ENCODE measurements at regions of chr1 and their contacts with region 1.

Region 1: DNA sequence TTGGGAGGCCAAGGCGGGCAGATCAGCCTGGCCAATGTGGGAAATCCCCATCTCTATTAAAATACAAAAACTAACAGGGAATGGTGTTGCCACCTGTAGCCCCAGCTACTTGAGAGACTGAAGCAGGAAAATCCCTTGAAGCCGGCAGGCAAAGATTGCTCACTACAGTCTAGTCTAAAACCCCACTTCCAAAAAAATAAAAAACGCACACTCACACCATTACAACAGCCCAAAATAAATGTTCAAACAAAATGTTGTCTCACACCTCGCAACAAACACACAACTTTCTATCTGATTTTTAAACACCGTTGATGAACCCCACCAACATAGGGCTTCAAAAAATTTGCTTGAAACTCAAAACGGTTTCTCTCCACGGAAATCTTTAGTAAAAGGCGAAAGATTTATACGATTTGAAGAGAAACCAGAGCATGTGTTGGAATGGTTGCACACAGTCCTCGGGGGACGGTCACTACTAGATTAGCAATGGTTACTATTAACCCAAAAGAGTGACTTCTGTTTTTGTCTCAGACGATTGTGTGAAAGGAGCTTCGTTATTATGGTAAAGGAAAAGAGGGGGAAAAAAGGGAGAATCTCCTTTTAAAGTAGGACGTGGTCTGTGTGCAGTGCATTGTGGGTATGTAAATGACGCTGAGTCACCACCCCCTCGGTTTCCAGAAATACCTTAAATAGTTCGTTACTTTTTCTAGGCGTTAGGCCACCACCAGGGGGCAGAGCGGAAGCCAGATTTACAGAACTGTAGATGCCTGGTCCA is at the start of gene RNU5D-1:
- DNase-seq: peak; percentile 96
- H3K4me3 Mint-ChIP-seq: peak within 1 kb of the TSS; percentile 69
- H3K27ac Mint-ChIP-seq: peak within 1 kb of the TSS; percentile 100
- H3K4me1 Mint-ChIP-seq: peaks cover 37% of the 10 kb centered on the region
- H3K27me3 Mint-ChIP-seq: peaks cover 3% of the 10 kb centered on the region
- total RNA-seq, gene RNU5D-1: not detected

Region 2: DNA sequence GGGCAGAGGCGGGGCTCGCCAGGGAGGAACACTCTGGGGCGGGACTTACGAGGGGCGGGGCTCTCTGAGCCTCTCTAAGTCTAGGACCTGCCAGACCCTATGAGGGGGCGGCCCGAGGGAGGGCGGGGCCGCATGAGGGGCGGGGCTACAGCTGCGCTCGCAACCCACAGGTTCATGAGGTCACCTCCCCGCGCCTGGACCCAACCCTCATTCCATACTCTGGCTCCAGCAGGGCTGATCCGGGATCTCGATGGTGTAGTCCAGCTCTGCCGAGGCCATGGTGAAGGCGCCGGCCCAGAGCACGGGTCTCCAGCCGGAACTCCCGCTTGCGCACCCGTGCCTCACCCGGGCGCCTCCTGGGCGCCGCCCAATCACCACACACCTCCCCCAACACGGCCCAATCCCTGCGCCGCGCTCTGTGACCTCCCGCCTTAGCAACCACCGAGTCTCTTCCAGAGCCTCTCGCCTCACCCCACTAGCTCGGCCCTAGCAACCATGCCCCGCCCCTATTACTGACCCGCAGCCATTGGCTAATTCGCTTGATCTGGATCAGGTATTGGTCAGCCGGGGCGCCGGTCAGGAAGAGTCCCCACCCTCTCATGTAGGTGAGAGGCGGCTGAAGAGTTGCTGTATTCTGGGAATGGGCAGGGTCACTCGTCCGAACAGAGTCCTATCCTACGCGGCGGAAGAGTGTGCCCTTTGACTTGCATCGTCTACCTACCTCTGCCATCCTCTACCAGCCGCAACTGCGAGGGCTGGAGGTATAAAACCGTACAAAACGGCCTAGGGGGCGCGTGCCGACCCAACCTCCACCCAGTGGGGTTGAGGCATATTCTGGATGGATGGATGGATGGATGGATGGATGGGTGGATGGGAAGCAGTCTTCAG is 56.6 kb before region 1 on chr1 and contains the starts of genes ARMH1 and TMEM53:
- CTCF ChIA-PET with region 1: no interaction called
- POLR2A ChIA-PET with region 1: interaction called, 7 read pairs
- intact Hi-C with region 1: loop called (anchors 1 kb)
- DNase-seq: peak; percentile 99
- H3K4me3 Mint-ChIP-seq: peak within 1 kb of the TSS; percentile 83
- H3K27ac Mint-ChIP-seq: peak within 1 kb of the TSS; percentile 88
- H3K4me1 Mint-ChIP-seq: peaks cover 23% of the 10 kb centered on the region
- H3K27me3 Mint-ChIP-seq: no peaks in the 10 kb centered on the region
- total RNA-seq, gene ARMH1: 134 to 141 TPM
- total RNA-seq, gene TMEM53: 5.1 to 6.5 TPM

Region 3: DNA sequence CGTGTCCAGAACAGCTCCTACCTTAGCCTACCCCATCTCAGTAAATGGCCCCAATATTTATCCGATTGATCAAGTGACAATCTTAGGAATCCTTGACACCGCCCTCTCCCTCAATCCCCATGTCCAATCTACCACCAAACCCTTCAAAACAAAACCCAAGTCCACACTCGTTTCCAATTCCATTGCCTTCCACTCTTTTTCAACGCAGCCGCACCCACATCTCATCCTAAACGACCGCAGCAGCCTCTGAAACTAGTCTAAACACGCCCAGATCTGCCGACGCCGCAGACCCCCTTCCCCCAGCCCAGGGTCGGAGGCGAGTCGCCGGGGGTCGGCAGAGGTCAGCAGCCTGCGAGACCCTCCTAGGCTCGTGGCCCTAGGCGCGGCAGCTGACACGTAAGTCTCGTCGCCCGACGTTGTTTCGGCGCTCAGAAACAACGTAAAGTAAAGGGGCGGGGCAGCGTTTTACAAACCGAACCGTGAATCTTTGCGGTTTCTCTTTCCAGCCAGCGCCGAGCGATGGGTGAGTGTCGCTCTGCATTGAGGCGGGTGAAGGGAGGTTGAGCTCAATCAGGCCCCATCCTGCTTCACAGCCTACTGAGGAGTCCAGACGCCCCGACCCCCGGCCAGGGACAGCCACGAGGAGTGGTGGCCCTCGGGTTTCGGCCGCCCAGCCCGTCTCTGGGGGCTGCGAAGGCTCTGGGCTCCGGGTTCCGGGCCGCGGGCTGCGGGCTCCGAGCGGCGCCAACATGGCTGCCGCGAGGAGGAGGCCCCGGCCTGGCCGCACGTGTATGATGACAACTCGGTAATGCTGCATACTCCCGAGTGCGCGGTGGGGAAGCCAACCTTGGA is 44.4 kb after region 1 on chr1 and contains the start of gene RPS8:
- CTCF ChIA-PET with region 1: interaction called, 20 read pairs
- POLR2A ChIA-PET with region 1: interaction called, 51 read pairs
- intact Hi-C with region 1: loop called (anchors 2 kb)
- DNase-seq: peak; percentile 94
- H3K4me3 Mint-ChIP-seq: peak within 1 kb of the TSS; percentile 83
- H3K27ac Mint-ChIP-seq: peak within 1 kb of the TSS; percentile 81
- H3K4me1 Mint-ChIP-seq: peaks cover 38% of the 10 kb centered on the region
- H3K27me3 Mint-ChIP-seq: no peaks in the 10 kb centered on the region
- total RNA-seq, gene RPS8: 2,983 to 3,047 TPM

Region 4: DNA sequence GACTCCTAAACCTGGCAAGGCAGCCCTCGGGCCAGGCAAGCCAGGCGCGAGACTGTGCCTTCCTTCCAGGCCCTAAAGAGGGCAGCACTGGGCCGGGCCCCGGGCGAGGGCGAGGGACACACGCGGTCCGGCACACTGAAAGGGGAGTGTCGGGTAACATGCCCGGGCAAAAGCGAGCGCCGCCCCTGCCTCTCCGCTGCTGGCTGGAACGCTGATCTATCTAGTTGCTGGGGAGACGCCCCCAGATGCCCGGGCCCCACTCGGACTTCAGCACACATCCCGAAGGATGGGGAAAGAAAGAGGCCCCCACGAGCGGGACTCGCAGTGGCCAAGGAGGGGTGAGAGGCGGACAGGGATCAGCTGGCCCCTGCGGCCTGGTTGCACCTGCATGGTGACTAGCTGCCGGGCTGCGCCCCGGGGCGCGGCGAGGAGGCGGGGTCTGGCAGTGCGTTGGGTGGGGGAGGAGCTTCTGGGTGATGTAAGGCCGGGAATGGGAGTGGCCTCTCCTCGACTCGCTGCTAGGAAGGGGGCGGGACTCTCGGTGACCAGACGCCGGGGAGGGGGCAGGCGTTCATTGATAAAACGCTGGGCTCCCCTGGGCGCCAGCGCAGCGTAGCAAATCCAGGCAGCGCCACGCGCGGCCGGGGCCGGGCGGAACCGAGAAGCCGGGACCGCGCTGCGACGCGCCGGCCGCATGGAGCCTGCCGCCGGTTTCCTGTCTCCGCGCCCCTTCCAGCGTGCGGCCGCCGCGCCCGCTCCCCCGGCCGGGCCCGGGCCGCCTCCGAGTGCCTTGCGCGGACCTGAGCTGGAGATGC is 69.0 kb after region 1 on chr1 and contains the start of gene PLK3:
- CTCF ChIA-PET with region 1: interaction called, 8 read pairs
- POLR2A ChIA-PET with region 1: interaction called, 17 read pairs
- intact Hi-C with region 1: no loop called
- DNase-seq: peak; percentile 99
- H3K4me3 Mint-ChIP-seq: peak within 1 kb of the TSS; percentile 93
- H3K27ac Mint-ChIP-seq: peak within 1 kb of the TSS; percentile 95
- H3K4me1 Mint-ChIP-seq: peaks cover 34% of the 10 kb centered on the region
- H3K27me3 Mint-ChIP-seq: no peaks in the 10 kb centered on the region
- total RNA-seq, gene PLK3: 80.2 to 87.9 TPM

Region 5: GRCh38 chr1:44812822-44813543 is 82.1 kb after region 1 on chr1:
- CTCF ChIA-PET with region 1: interaction called, 48 read pairs
- POLR2A ChIA-PET with region 1: interaction called, 151 read pairs
- intact Hi-C with region 1: loop called (anchors 1 kb)
- DNase-seq: no peak
- H3K4me3 Mint-ChIP-seq: peak overlapping the region; percentile 73
- H3K27ac Mint-ChIP-seq: peak overlapping the region; percentile 98
- H3K4me1 Mint-ChIP-seq: peaks cover 67% of the 10 kb centered on the region
- H3K27me3 Mint-ChIP-seq: no peaks in the 10 kb centered on the region

Region 6: DNA sequence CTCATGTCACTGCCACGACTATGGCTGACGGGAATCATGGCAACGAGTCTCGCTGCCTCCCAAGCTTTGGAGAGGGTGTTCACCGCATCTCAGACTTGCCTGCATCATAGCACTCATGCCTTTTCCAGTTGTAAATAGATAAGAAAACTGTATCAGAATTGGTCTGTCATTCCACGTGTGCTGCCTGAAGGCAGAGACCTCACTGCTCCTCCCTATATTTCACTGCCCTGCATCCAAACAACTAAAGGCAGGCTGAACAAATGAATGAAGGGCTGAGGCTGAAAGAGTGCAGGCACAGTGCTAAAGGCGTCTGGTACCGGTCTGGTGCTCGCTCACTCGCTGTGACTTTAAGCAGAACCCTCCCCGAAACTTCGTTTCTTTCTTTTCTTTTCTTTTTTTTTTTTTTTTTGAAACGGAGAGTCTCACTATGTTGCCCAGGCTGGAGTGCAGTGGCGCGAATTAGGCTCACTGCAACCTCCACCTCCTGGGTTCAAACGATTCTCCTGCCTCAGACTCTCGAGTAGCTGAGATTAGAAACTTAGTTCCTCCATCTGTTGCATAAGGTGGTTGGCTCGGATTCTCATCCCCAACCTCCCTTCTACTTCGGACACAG is 254.9 kb after region 1 on chr1:
- CTCF ChIA-PET with region 1: no interaction called
- POLR2A ChIA-PET with region 1: no interaction called
- intact Hi-C with region 1: loop called (anchors 10 kb)
- DNase-seq: no peak
- H3K4me3 Mint-ChIP-seq: peak overlapping the region; percentile 99
- H3K27ac Mint-ChIP-seq: peak overlapping the region; percentile 85
- H3K4me1 Mint-ChIP-seq: peaks cover 29% of the 10 kb centered on the region
- H3K27me3 Mint-ChIP-seq: no peaks in the 10 kb centered on the region

Region 7: DNA sequence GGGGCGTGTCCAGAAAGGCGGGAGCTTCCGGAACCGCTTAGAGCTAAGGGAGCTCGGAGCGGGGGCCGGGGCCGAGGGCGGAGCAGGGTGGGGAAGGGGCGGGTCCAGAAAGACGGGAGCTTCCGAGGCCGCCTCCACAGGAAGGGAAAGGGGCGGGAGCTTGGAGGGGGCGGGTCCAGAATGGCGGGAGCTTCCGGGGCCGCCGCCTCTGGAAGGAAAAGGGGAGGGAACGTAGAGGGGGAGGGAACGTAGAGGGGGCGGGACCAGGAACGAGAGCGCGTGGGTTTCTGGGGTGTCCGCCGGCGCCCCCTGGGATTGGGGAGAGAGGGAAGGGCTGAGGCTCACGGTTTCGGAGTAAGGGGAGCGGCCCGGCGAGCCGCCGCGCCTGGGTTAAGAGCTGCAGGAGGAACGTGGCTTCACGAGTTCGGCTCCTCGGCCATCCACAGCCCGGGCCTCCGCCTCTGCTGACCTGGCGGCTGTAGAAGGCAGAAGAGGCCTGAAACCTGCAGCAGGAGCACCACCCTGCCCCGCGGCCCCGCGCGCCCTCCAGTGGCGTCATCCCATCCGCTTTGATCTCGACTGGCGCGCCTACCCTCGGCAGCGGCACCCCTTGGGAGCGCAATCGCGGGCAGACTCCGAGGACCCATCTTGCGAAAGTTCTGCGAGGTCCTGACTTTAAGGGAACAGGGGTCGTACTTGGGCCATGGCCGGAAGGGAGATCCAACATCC is 572.8 kb after region 1 on chr1:
- CTCF ChIA-PET with region 1: interaction called, 3 read pairs
- POLR2A ChIA-PET with region 1: no interaction called
- intact Hi-C with region 1: loop called (anchors 1 kb)
- DNase-seq: peak; percentile 100
- H3K4me3 Mint-ChIP-seq: peak overlapping the region; percentile 89
- H3K27ac Mint-ChIP-seq: peak overlapping the region; percentile 96
- H3K4me1 Mint-ChIP-seq: peaks cover 29% of the 10 kb centered on the region
- H3K27me3 Mint-ChIP-seq: no peaks in the 10 kb centered on the region